ENCODE measurements at regions of chr5 and their contacts with region 1.

Region 1: DNA sequence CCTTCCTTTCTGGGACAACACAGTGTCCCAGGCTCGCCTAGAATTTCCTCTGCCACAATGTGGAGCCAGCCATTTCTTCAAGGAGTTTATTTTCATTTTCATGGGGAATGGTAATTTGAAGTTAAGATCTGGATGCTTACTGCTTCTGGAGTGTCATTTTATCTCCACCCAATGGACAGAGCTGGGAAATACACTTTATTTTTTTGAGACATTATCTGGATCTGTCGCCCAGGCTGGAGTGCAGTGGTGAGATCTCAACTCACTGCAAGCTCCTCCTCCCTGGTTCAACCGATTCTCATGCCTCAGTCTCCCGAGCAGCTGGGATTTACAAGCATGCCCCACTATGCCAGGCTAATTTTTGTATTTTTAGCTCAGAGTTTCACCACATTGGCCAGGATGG is 12.7 kb upstream of the THG1L start:
- DNase-seq: no peak
- H3K4me3 ChIP-seq: no peak overlapping the region
- H3K27ac ChIP-seq: peak overlapping the region in 2 of 8 donors; percentile 9 to 33
- H3K4me1 ChIP-seq: peaks cover 0 to 24% (median 12%) of the 10 kb centered on the region in 6 donors
- H3K27me3 ChIP-seq: no peaks in the 10 kb centered on the region
- CTCF ChIP-seq: peak; percentile 25 to 85 (median 61)
- POLR2A ChIP-seq: no peak

Region 2: GRCh38 chr5:157328277-157328912 is 390.1 kb before region 1 on chr5:
- intact Hi-C with region 1: no loop called
- DNase-seq: peak; percentile 86
- H3K4me3 ChIP-seq: peak overlapping the region in 2 of 8 donors; percentile 17 to 34
- H3K27ac ChIP-seq: peak overlapping the region in 7 of 8 donors; percentile 58 to 81 (median 71)
- H3K4me1 ChIP-seq: peaks cover 0 to 23% (median 14%) of the 10 kb centered on the region in 6 donors
- H3K27me3 ChIP-seq: no peaks in the 10 kb centered on the region
- CTCF ChIP-seq: peak; percentile 73 to 91 (median 87)
- POLR2A ChIP-seq: no peak

Region 3: GRCh38 chr5:157342822-157343402 is 375.6 kb before region 1 on chr5:
- intact Hi-C with region 1: loop called (anchors 10 kb)
- DNase-seq: no peak
- H3K4me3 ChIP-seq: no peak overlapping the region
- H3K27ac ChIP-seq: no peak overlapping the region
- H3K4me1 ChIP-seq: no peaks in the 10 kb centered on the region
- H3K27me3 ChIP-seq: no peaks in the 10 kb centered on the region
- CTCF ChIP-seq: peak in 8 of 11 experiments; percentile 18 to 65 (median 56)
- POLR2A ChIP-seq: no peak

Region 4: GRCh38 chr5:157431544-157432200 is 286.8 kb before region 1 on chr5:
- intact Hi-C with region 1: loop called (anchors 5 kb)
- DNase-seq: no peak
- H3K4me3 ChIP-seq: no peak overlapping the region
- H3K27ac ChIP-seq: peak overlapping the region in 1 of 8 donors; percentile 26
- H3K4me1 ChIP-seq: peaks cover 0 to 10% (median 5%) of the 10 kb centered on the region in 6 donors
- H3K27me3 ChIP-seq: no peaks in the 10 kb centered on the region
- CTCF ChIP-seq: peak in 10 of 11 experiments; percentile 21 to 75 (median 51)
- POLR2A ChIP-seq: no peak

Region 5: GRCh38 chr5:157670662-157671591 is 47.6 kb before region 1 on chr5 and contains the start of gene C5orf52:
- intact Hi-C with region 1: loop called (anchors 5 kb)
- DNase-seq: peak; percentile 81
- H3K4me3 ChIP-seq: peak within 1 kb of the TSS; percentile 46 to 72 (median 58)
- H3K27ac ChIP-seq: peak within 1 kb of the TSS in 1 of 8 donors; percentile 24
- H3K4me1 ChIP-seq: peaks cover 0 to 23% (median 17%) of the 10 kb centered on the region in 6 donors
- H3K27me3 ChIP-seq: peaks cover 0 to 32% (median 4%) of the 10 kb centered on the region in 7 donors
- CTCF ChIP-seq: no peak
- POLR2A ChIP-seq: no peak
- total RNA-seq, gene C5orf52: not detected

Region 6: GRCh38 chr5:158007336-158007735 is 288.8 kb after region 1 on chr5:
- intact Hi-C with region 1: no loop called
- DNase-seq: no peak
- H3K4me3 ChIP-seq: no peak overlapping the region
- H3K27ac ChIP-seq: no peak overlapping the region
- H3K4me1 ChIP-seq: no peaks in the 10 kb centered on the region
- H3K27me3 ChIP-seq: no peaks in the 10 kb centered on the region
- CTCF ChIP-seq: no peak
- POLR2A ChIP-seq: no peak

Region 7: GRCh38 chr5:158070859-158071258 is 352.3 kb after region 1 on chr5:
- intact Hi-C with region 1: no loop called
- DNase-seq: no peak
- H3K4me3 ChIP-seq: no peak overlapping the region
- H3K27ac ChIP-seq: no peak overlapping the region
- H3K4me1 ChIP-seq: peaks cover 0 to 11% (median 2%) of the 10 kb centered on the region in 6 donors
- H3K27me3 ChIP-seq: no peaks in the 10 kb centered on the region
- CTCF ChIP-seq: no peak
- POLR2A ChIP-seq: no peak

Region 8: DNA sequence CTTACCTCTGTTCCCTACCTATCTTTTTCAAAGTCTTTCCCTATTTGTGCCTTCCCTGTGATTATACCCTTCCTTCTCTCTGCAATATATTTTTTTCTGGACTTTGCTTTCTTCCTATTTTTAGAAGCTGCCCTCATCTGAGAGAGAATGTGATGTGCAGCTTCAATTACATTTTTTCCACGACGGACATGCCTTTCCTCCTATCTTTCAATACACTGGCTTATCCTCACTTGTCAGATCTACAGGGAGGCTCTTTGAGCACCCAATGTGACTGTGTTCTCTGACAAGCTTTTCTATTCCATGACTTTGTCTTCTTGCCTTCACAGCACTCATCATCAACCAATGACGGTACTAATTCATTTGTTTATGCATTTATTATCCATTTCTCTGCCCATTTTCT is 368.3 kb after region 1 on chr5:
- intact Hi-C with region 1: no loop called
- DNase-seq: no peak
- H3K4me3 ChIP-seq: no peak overlapping the region
- H3K27ac ChIP-seq: no peak overlapping the region
- H3K4me1 ChIP-seq: no peaks in the 10 kb centered on the region
- H3K27me3 ChIP-seq: no peaks in the 10 kb centered on the region
- CTCF ChIP-seq: no peak
- POLR2A ChIP-seq: no peak

Measured in spleen (tissue), 13 donors.